Lower lobe of right lung (tissue), 2 donors: ENCODE measurements at regions of chr7 and their contacts with region 1.

Region 1: DNA sequence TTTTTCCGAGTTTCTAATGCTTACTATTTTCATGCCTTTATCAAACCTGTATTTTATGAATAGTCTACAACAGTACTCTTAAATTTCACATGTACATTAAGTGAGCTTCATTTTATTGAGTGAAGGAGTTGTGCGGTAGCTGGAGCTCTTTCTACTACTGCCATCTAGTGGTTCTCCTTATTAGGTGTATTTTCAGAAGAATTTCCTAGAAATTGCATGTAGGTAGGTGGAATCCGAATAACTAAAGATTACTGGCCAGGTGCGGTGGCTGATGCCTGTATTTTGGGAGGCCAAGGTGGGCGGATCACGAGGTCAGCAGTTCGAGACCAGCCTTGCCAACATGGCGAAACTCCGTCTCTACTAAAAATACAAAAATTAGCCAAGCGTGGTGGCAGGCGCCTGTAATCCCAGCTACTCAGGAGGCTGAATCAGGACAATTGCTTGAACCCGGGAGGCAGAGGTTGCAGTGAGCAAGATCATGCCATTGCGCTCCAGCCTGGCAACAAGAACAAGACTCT is 38.3 kb downstream of the LRRC72 start:
- DNase-seq: no peak
- ATAC-seq: peak; percentile 61 to 76
- H3K4me3 ChIP-seq: no peak overlapping the region
- H3K27ac ChIP-seq: no peak overlapping the region
- H3K4me1 ChIP-seq: no peaks in the 10 kb centered on the region
- H3K27me3 ChIP-seq: no peaks in the 10 kb centered on the region
- CTCF ChIP-seq: peak; percentile 79

Region 2: GRCh38 chr7:16071246-16071857 is 493.6 kb before region 1 on chr7:
- intact Hi-C with region 1: loop called (anchors 10 kb)
- DNase-seq: no peak
- ATAC-seq: peak in 1 of 2 donors; percentile 56
- H3K4me3 ChIP-seq: no peak overlapping the region
- H3K27ac ChIP-seq: no peak overlapping the region
- H3K4me1 ChIP-seq: peaks cover 11% of the 10 kb centered on the region
- H3K27me3 ChIP-seq: no peaks in the 10 kb centered on the region
- CTCF ChIP-seq: peak; percentile 78

Region 3: DNA sequence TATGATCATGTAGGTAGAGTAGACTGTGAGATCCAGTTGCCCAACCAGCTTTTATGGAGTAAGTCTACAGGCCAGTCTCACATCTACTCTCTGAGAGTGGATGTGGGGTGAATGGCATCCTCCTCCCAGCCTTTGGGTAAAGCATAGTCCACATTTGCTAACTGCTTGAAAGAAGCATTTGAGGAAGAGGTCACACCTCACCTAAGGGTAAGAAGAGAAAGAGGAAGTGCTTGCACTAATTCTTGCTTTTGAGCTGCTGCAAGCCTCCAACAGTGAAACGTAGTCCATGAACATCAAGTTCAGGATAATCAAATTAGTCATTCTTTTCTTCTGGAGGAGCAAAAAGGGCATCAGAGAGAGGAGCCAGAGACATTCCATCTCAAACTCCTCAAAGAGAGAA is 410.7 kb after region 1 on chr7:
- intact Hi-C with region 1: no loop called
- DNase-seq: no peak
- ATAC-seq: peak in 1 of 2 donors; percentile 27
- H3K4me3 ChIP-seq: no peak overlapping the region
- H3K27ac ChIP-seq: no peak overlapping the region
- H3K4me1 ChIP-seq: peaks cover 17% of the 10 kb centered on the region
- H3K27me3 ChIP-seq: no peaks in the 10 kb centered on the region
- CTCF ChIP-seq: no peak